Activated CD4-positive, alpha-beta memory T cell treated with anti-CD3 and anti-CD28 coated beads, Interleukin-2, amount 10 ng/mL, durations not matched to agents 7 days and 5 days (primary cell): ENCODE measurements at regions of chr7 and their contacts with region 1.

Region 1: GRCh38 chr7:44081266-44081748 is 1.0 kb downstream of the POLM start:
- DNase-seq: peak; percentile 47
- H3K4me3 Mint-ChIP-seq: peak overlapping the region; percentile 78
- H3K27ac Mint-ChIP-seq: peak overlapping the region; percentile 83
- H3K4me1 Mint-ChIP-seq: peaks cover 46% of the 10 kb centered on the region
- H3K27me3 Mint-ChIP-seq: no peaks in the 10 kb centered on the region

Region 2: GRCh38 chr7:44044315-44045225 is 36.7 kb before region 1 on chr7 and contains the start of gene DBNL:
- CTCF ChIA-PET with region 1: interaction called, 3 read pairs
- POLR2A ChIA-PET with region 1: interaction called, 35 read pairs
- DNase-seq: peak; percentile 94
- H3K4me3 Mint-ChIP-seq: peak within 1 kb of the TSS; percentile 83
- H3K27ac Mint-ChIP-seq: peak within 1 kb of the TSS; percentile 98
- H3K4me1 Mint-ChIP-seq: peaks cover 53% of the 10 kb centered on the region
- H3K27me3 Mint-ChIP-seq: no peaks in the 10 kb centered on the region
- total RNA-seq, gene DBNL: 175 to 176 TPM

Region 3: GRCh38 chr7:44065436-44066118 is 15.7 kb before region 1 on chr7 and contains the start of gene PGAM2:
- CTCF ChIA-PET with region 1: no interaction called
- POLR2A ChIA-PET with region 1: interaction called, 42 read pairs
- DNase-seq: no peak
- H3K4me3 Mint-ChIP-seq: no peak within 1 kb of the TSS
- H3K27ac Mint-ChIP-seq: no peak within 1 kb of the TSS
- H3K4me1 Mint-ChIP-seq: peaks cover 6% of the 10 kb centered on the region
- H3K27me3 Mint-ChIP-seq: no peaks in the 10 kb centered on the region
- total RNA-seq, gene PGAM2: 0.43 TPM in 1 of 2 experiments, not detected in the other

Region 4: DNA sequence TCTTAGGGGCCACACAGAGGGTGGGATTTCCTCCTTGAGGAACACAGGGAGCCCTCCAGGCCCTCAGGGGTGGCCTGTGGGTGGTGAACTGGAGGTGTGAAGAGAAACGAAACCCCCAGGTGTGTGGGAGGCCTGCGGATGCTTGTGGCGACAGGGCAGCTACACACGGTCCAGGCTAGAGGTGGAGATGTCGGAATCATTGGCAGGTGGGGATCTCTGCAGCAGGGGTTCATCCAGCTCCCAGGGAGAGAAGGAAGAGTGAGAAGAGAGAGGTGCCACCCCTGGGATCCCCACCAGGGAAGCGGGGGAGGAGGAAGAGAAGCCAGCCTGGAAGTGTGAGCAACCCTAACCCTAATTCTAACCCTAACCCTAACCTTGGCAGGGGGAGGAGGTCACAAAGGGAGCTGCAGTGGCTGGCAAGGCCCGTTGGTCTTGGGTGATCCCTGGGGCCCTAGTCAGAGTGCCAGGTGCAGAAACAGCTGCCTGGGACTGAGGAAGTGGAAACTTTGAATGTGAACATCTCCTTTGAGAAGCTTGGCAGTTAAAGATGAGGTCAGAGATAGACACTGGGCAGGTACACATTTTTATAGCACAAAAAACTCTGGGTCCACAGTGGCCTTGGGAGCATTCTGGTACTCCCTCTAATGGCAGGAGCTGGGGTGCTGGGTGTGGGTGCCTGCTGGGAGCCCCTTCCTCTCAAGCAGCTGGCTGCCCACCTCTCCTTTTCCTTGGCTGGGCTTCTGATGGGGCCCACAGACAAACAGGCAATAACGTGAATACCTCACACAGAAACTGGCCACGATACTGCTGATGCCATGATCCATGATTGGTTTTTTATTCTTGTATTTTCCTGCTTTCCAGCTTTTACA is 16.0 kb after region 1 on chr7:
- CTCF ChIA-PET with region 1: interaction called, 5 read pairs
- POLR2A ChIA-PET with region 1: interaction called, 11 read pairs
- DNase-seq: no peak
- H3K4me3 Mint-ChIP-seq: no peak overlapping the region
- H3K27ac Mint-ChIP-seq: peak overlapping the region; percentile 34
- H3K4me1 Mint-ChIP-seq: peaks cover 16% of the 10 kb centered on the region
- H3K27me3 Mint-ChIP-seq: peaks cover 4% of the 10 kb centered on the region

Region 5: GRCh38 chr7:44123190-44124003 is 42.1 kb after region 1 on chr7 and contains the start of gene POLD2:
- CTCF ChIA-PET with region 1: interaction called, 3 read pairs
- POLR2A ChIA-PET with region 1: interaction called, 11 read pairs
- DNase-seq: peak; percentile 98
- H3K4me3 Mint-ChIP-seq: peak within 1 kb of the TSS; percentile 87
- H3K27ac Mint-ChIP-seq: peak within 1 kb of the TSS; percentile 72
- H3K4me1 Mint-ChIP-seq: peaks cover 37% of the 10 kb centered on the region
- H3K27me3 Mint-ChIP-seq: peaks cover 14% of the 10 kb centered on the region
- total RNA-seq, gene POLD2: 82.3 to 84.6 TPM